Activated CD4-positive, alpha-beta T cell treated with anti-CD3 and anti-CD28 coated beads, Interleukin-2, amount 10 ng/mL, durations not matched to agents 24 days and 14 days (primary cell): ENCODE measurements at regions of chr21 and their contacts with region 1.

Region 1: GRCh38 chr21:46144464-46145070 is 10.8 kb downstream of the FTCD start:
- DNase-seq: no peak
- H3K4me3 Mint-ChIP-seq: peak overlapping the region; percentile 26
- H3K27ac Mint-ChIP-seq: peak overlapping the region; percentile 84
- H3K4me1 Mint-ChIP-seq: peaks cover 11% of the 10 kb centered on the region
- H3K27me3 Mint-ChIP-seq: no peaks in the 10 kb centered on the region

Region 2: DNA sequence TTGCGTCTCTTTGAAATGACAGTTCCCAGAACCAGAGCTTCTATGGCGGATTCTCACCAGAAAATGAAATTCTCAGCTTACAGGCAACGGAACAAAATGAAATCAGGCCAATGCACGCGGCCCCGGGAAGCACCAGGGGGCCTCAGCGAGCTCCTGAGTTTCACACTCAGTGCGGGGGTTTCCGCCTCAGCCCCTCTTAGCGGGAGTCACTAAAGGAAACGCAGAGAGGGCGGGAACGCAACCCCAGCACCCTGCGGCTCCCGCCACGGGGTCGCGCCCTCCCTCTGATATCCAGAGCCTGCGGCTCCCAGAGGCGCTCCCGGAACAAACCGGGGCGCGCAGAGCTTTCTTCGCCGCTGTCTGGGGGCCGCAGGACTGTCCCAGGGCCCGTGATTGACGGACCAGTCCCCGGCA is 170.9 kb before region 1 on chr21:
- intact Hi-C with region 1: loop called (anchors 5 kb)
- DNase-seq: peak; percentile 92
- H3K4me3 Mint-ChIP-seq: peak overlapping the region; percentile 80
- H3K27ac Mint-ChIP-seq: no peak overlapping the region
- H3K4me1 Mint-ChIP-seq: peaks cover 11% of the 10 kb centered on the region
- H3K27me3 Mint-ChIP-seq: peaks cover 27% of the 10 kb centered on the region

Region 3: DNA sequence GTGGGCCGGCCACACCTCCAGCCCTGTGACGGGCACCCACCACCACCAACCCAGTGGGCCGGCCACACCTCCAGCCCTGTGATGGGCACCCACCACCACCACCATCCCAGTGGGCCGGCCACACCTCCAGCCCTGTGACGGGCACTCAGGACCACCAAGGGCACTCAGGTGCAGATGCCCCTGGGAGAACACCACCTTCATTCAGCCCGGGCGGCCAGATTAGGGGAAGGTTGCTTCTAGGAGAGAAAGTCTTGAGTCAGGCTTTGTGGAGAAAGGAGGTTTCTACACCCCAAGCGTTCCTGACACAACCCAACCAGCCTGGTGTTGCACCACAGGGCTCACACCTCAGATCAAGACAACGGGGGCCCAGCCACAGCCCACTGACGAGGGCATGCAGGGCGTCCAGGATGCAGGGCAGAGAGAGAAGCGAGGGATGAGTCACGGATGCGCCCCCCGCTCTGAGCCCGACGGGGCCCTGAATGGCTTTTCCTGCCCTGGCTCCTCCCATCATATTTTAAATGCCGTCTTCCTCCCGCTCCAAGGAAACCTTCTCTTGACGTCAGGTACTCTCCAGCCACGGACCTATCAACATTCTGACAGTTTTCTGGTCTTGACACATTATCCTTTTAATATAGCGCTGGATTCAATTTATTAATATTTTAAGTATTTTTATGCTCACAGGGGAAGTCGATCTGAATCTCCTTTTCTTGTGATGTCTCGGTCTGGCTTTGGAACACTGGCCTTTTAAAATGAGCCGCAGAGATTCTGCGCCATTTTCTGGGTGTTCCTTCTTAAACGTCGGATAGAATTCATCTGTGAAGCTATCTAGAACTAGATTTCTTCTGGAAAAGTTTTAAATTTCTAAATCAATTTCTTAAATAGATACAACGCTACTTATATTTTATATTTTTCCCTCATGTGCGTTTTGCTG is 40.3 kb after region 1 on chr21:
- intact Hi-C with region 1: loop called (anchors 1 kb)
- DNase-seq: peak; percentile 94
- H3K4me3 Mint-ChIP-seq: peak overlapping the region; percentile 91
- H3K27ac Mint-ChIP-seq: peak overlapping the region; percentile 89
- H3K4me1 Mint-ChIP-seq: peaks cover 7% of the 10 kb centered on the region
- H3K27me3 Mint-ChIP-seq: no peaks in the 10 kb centered on the region

Region 4: DNA sequence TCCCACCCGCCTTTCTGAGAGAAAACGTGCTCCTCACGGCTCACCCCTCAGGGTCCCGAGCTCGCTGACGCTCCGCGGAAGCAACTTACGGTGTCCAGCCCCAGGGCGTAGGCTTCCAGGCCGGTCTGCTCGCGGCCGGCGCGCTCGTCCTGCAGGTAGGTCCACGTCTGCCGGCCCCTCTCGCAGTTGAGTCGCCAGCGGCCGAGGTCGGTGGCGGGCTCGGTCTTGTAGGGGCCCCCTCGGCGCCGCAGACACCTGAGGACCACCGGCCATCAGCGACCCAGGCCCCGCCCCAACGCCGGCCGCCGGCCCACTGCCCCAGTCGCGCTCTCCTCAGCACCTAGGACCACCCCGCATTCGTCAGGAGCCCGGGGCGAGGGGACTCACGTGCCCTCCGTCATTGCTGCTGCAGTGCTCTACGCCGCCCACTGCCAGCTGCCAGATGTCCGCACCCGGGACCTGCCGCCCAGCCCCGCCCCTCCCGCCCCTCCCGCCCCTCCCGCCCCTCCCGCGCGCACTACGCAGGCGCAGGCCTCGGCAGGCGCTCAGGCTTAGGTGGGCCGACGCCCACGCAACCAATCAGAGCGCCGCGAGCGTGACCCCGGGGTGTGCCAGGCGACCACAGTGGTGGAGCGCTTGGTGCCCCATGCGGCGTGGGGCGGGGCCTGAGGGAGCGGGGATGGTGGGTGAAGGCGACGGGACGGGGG is 83.9 kb after region 1 on chr21 and contains the start of gene LSS:
- intact Hi-C with region 1: loop called (anchors 5 kb)
- DNase-seq: peak; percentile 99
- H3K4me3 Mint-ChIP-seq: peak within 1 kb of the TSS; percentile 94
- H3K27ac Mint-ChIP-seq: peak within 1 kb of the TSS; percentile 100
- H3K4me1 Mint-ChIP-seq: peaks cover 51% of the 10 kb centered on the region
- H3K27me3 Mint-ChIP-seq: no peaks in the 10 kb centered on the region
- total RNA-seq, gene LSS: 19.7 and 23.1 TPM in 2 replicates

Region 5: GRCh38 chr21:46458315-46459023 is 313.9 kb after region 1 on chr21 and contains the start of gene DIP2A:
- intact Hi-C with region 1: loop called (anchors 5 kb)
- DNase-seq: peak; percentile 98
- H3K4me3 Mint-ChIP-seq: peak within 1 kb of the TSS; percentile 93
- H3K27ac Mint-ChIP-seq: peak within 1 kb of the TSS; percentile 96
- H3K4me1 Mint-ChIP-seq: peaks cover 37% of the 10 kb centered on the region
- H3K27me3 Mint-ChIP-seq: no peaks in the 10 kb centered on the region
- total RNA-seq, gene DIP2A: 30.5 and 31.3 TPM in 2 replicates